ENCODE measurements at regions of chr4 and their contacts with region 1.

Region 1: DNA sequence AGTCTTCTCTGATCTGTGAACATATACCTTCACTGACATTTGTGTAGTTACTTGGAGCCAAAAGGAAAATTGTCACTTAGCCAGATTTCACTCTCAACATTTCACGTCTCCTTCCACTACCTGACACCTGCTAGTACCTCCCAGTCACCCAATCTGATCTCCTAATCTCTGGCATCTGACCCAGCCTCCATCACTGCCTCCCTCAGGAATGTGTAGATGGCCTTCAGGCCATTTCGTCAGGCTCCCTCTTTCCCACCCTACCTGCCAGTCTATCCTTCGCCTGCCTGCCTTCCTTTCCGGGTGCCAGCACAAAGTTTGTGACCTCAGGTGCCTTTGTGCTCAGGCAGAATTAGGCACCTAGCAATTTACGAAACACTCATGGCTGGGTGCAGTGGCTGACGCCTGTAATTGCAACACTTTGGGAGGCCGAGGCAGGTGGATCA is 40.9 kb downstream of the GALNT7 start:
- DNase-seq: peak; percentile 19 to 57
- H3K4me3 ChIP-seq: no peak overlapping the region
- H3K4me3 Mint-ChIP-seq: no peak overlapping the region
- H3K27ac Mint-ChIP-seq: no peak overlapping the region
- H3K4me1 ChIP-seq: peaks cover 14% of the 10 kb centered on the region; the same call in 1 of the 2 replicates
- H3K4me1 Mint-ChIP-seq: no peaks in the 10 kb centered on the region
- H3K27me3 ChIP-seq: no peaks in the 10 kb centered on the region
- H3K27me3 Mint-ChIP-seq: no peaks in the 10 kb centered on the region
- CTCF ChIP-seq: no peak

Region 2: DNA sequence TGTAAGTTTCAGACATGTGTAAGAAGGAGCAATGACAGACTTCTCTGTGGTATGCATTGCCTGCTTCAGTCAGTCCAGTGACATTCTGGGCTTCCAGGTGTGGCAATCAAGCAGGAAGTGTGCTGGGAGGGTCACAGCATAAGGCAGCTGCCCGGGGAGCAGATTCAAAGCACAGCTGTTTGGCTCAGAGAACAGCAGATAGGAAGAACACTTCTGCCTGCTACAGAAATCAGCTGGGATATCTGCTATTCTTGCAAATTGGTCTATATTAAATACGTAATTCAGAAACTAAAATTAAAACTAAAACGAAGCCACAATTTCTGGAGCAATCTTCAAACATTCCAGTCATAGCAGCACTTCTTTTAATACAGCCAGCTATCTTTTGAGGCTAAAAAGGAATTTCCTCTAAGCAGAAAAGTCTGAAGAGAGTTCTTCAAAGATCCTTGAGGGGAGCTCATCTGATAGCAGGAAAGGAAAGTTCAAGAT is 88.4 kb before region 1 on chr4:
- CTCF ChIA-PET with region 1: no interaction called
- POLR2A ChIA-PET with region 1: no interaction called
- intact Hi-C with region 1: no loop called
- DNase-seq: peak; percentile 59 to 63
- H3K4me3 ChIP-seq: no peak overlapping the region
- H3K4me3 Mint-ChIP-seq: peak overlapping the region; percentile 34
- H3K27ac Mint-ChIP-seq: peak overlapping the region; percentile 41
- H3K4me1 ChIP-seq: no peaks in the 10 kb centered on the region
- H3K4me1 Mint-ChIP-seq: peaks cover 6% of the 10 kb centered on the region
- H3K27me3 ChIP-seq: no peaks in the 10 kb centered on the region
- H3K27me3 Mint-ChIP-seq: no peaks in the 10 kb centered on the region
- CTCF ChIP-seq: no peak

Region 3: GRCh38 chr4:173230062-173230461 is 20.6 kb after region 1 on chr4:
- CTCF ChIA-PET with region 1: no interaction called
- POLR2A ChIA-PET with region 1: no interaction called
- intact Hi-C with region 1: no loop called
- DNase-seq: no peak
- H3K4me3 ChIP-seq: no peak overlapping the region
- H3K4me3 Mint-ChIP-seq: no peak overlapping the region
- H3K27ac Mint-ChIP-seq: no peak overlapping the region
- H3K4me1 ChIP-seq: no peaks in the 10 kb centered on the region
- H3K4me1 Mint-ChIP-seq: no peaks in the 10 kb centered on the region
- H3K27me3 ChIP-seq: no peaks in the 10 kb centered on the region
- H3K27me3 Mint-ChIP-seq: no peaks in the 10 kb centered on the region
- CTCF ChIP-seq: no peak

Region 4: DNA sequence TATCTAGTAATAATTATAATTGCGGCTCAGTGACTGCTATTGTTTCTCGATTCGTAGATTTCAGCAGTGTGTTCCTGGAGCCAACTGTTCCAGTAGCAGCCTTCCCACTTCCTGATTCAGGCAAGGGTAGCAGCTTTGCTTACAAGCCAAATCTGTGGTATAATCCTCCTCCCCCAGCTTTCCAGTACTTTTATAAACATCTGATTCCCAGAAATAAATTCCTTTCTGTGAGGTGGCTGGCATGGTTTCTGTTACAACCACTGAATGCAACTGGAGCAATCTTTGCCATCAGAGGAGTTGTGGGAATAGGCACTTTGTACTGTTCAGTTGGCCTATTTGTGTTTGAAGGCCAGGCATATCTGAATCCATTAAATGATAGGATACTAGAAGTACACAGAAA is 1539.6 kb after region 1 on chr4:
- CTCF ChIA-PET with region 1: no interaction called
- POLR2A ChIA-PET with region 1: no interaction called
- intact Hi-C with region 1: loop called (anchors 10 kb)
- DNase-seq: no peak
- H3K4me3 ChIP-seq: no peak overlapping the region
- H3K4me3 Mint-ChIP-seq: no peak overlapping the region
- H3K27ac Mint-ChIP-seq: no peak overlapping the region
- H3K4me1 ChIP-seq: no peaks in the 10 kb centered on the region
- H3K4me1 Mint-ChIP-seq: no peaks in the 10 kb centered on the region
- H3K27me3 ChIP-seq: no peaks in the 10 kb centered on the region
- H3K27me3 Mint-ChIP-seq: peaks cover 7% of the 10 kb centered on the region
- CTCF ChIP-seq: no peak